ENCODE measurements at regions of chr2 and their contacts with region 1.

Region 1: GRCh38 chr2:181457121-181457740 is at the start of gene ITGA4:
- DNase-seq: peak; percentile 87
- H3K4me3 Mint-ChIP-seq: peak within 1 kb of the TSS; percentile 98
- H3K27ac Mint-ChIP-seq: peak within 1 kb of the TSS; percentile 96
- H3K4me1 Mint-ChIP-seq: peaks cover 58% of the 10 kb centered on the region
- H3K27me3 Mint-ChIP-seq: no peaks in the 10 kb centered on the region
- total RNA-seq, gene ITGA4: 96.5 and 106 TPM in 2 replicates

Region 2: GRCh38 chr2:181123798-181124231 is 333.4 kb before region 1 on chr2:
- intact Hi-C with region 1: loop called (anchors 1 kb)
- DNase-seq: peak; percentile 74
- H3K4me3 Mint-ChIP-seq: peak overlapping the region; percentile 76
- H3K27ac Mint-ChIP-seq: peak overlapping the region; percentile 95
- H3K4me1 Mint-ChIP-seq: peaks cover 61% of the 10 kb centered on the region
- H3K27me3 Mint-ChIP-seq: no peaks in the 10 kb centered on the region

Region 3: DNA sequence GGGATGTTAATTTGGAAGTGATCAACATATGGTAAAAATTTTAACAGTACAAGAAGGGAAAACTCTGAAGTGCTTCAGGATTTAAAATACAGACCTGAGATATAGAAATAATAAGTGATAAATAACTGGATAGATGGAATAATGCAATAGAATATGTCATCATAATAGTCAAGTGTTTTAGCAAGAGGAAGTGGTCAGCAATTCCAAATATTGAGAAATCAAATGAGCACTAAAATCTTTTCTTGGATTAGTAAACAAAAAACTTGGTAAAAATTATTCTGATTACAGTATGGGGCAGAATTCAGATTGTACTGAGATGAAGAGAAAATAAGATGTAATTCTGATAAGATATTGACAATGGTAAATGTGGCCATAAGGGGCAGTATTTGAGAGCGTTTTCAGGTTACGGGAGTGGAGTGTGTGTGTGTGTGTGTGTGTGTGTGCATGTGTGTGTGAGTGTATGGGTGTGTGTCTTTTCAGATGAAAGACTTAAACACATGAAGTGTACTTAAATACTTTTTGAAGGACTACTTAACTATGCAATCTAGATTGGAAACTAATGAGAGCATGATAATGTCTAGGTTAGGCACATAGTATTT is 217.9 kb before region 1 on chr2:
- intact Hi-C with region 1: loop called (anchors 5 kb)
- DNase-seq: no peak
- H3K4me3 Mint-ChIP-seq: no peak overlapping the region
- H3K27ac Mint-ChIP-seq: no peak overlapping the region
- H3K4me1 Mint-ChIP-seq: peaks cover 76% of the 10 kb centered on the region
- H3K27me3 Mint-ChIP-seq: no peaks in the 10 kb centered on the region

Region 4: GRCh38 chr2:181354626-181355025 is 102.6 kb before region 1 on chr2:
- intact Hi-C with region 1: loop called (anchors 2 kb)
- DNase-seq: no peak
- H3K4me3 Mint-ChIP-seq: no peak overlapping the region
- H3K27ac Mint-ChIP-seq: no peak overlapping the region
- H3K4me1 Mint-ChIP-seq: peaks cover 41% of the 10 kb centered on the region
- H3K27me3 Mint-ChIP-seq: no peaks in the 10 kb centered on the region

Region 5: DNA sequence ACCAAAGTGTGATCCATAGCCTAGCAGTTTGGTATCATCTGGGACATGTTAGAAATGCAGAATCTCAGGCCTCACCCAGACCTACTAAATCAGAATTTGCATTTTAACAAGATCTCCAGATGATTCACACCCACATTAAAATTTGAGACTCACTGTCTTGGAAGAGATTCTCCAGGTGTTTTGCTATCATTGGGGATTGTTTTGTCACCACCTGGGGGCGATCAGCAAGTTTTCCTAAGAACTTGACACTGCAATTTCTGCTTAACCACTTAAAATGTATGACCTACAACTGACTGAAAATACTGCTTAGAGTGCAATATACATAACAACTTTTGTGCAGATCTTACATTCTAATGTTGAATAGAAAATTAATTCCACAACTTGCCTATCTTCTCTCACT is 19.0 kb before region 1 on chr2:
- intact Hi-C with region 1: loop called (anchors 2 kb)
- DNase-seq: no peak
- H3K4me3 Mint-ChIP-seq: no peak overlapping the region
- H3K27ac Mint-ChIP-seq: no peak overlapping the region
- H3K4me1 Mint-ChIP-seq: peaks cover 40% of the 10 kb centered on the region
- H3K27me3 Mint-ChIP-seq: no peaks in the 10 kb centered on the region